Kidney (tissue), 22 donors: ENCODE measurements at regions of chr5 and their contacts with region 1.

Region 1: DNA sequence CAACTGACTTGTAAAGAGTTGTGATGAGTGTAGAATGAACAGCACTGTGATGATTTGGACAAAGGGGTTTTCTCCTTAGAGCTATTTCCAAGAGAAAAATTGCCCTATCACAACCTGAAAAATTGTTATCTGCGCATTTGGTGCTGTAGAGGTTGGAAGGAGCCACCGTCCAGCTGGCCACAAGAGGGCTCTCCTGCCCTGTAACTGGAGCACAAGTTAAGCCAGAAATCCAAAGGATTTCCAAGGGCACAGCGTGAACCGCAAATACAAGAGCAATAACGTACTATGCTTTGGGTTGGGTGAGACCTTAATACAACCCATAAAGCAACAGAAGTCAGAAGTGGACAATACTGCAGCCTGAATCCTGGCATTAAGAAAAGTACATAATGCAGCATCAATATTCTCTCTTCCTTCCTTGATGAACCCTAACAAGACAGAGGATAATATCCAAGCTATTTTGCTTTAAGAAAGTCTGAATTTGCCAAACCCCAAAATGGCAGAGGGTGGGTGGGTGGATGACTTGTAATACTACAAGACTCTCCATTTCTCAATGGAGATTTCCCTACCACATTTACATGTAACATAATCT is 56.8 kb upstream of the SMIM32 start:
- DNase-seq: peak in 4 of 5 donors; percentile 61 to 83 (median 78)
- H3K4me3 ChIP-seq: no peak overlapping the region
- H3K27ac ChIP-seq: no peak overlapping the region
- H3K4me1 ChIP-seq: peaks cover 0 to 2% (median 0%) of the 10 kb centered on the region in 3 donors
- H3K27me3 ChIP-seq: no peaks in the 10 kb centered on the region
- CTCF ChIP-seq: peak; percentile 78

Region 2: GRCh38 chr5:136769900-136770684 is 520.3 kb after region 1 on chr5:
- intact Hi-C with region 1: loop called (anchors 10 kb)
- DNase-seq: peak; percentile 80 to 89 (median 82)
- H3K4me3 ChIP-seq: no peak overlapping the region
- H3K27ac ChIP-seq: no peak overlapping the region
- H3K4me1 ChIP-seq: peaks cover 0 to 3% (median 0%) of the 10 kb centered on the region in 3 donors
- H3K27me3 ChIP-seq: no peaks in the 10 kb centered on the region
- CTCF ChIP-seq: peak; percentile 88